ENCODE measurements at regions of chr2 and their contacts with region 1.

Region 1: DNA sequence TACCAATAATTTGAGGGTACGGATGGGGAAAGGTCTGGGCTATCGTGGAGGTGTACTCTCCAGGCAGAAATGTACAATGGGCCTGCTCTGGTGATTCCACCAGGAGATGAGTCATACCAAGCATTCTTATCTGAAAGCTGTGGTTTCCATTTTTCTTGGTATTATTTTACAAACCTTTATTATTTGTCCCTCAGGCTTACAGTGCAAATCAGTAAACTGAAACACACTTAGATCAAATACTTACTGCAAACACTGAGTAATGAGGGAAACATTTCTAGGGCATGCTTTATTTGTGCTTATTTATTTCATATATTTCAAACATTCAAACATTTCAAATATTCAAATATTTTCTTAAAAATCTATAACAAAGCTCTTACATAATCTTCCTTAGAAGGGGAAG is 319.8 kb downstream of the RND3 start:
- DNase-seq: peak; percentile 42 to 86
- H3K4me3 ChIP-seq: no peak overlapping the region
- H3K27ac ChIP-seq: peak overlapping the region; percentile 98
- H3K4me1 ChIP-seq: peaks cover 48% of the 10 kb centered on the region
- H3K27me3 ChIP-seq: no peaks in the 10 kb centered on the region
- CTCF ChIP-seq: no peak

Region 2: DNA sequence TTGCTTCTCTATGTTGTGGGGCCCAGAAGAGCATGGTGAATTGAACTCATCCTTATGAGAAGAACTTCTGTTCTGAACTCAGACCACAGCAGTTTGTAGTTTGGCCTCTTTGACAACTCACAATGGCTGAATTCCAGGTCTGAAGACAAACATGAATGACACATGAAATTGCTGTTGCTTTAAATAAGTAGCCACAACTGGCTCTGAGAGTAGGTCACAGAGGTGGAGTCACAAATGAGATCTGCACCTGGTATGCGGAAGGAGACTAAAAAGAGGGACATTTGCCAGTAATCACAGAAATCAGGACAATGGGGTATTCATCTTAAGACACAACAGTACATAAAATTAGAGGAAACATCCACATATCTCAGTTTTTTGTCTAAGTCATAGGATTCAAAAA is 289.8 kb before region 1 on chr2:
- CTCF ChIA-PET with region 1: no interaction called
- POLR2A ChIA-PET with region 1: no interaction called
- intact Hi-C with region 1: loop called (anchors 1 kb)
- DNase-seq: peak; percentile 32 to 66
- H3K4me3 ChIP-seq: no peak overlapping the region
- H3K27ac ChIP-seq: 0 out of 2 replicates have a peak overlapping the region, but pooled peaks have one; percentile 26
- H3K4me1 ChIP-seq: 0 out of 2 replicates have a peak, but pooled peaks cover 6% of the 10 kb centered on the region
- H3K27me3 ChIP-seq: no peaks in the 10 kb centered on the region
- CTCF ChIP-seq: no peak

Region 3: GRCh38 chr2:150133623-150134022 is 34.1 kb before region 1 on chr2:
- CTCF ChIA-PET with region 1: no interaction called
- POLR2A ChIA-PET with region 1: no interaction called
- intact Hi-C with region 1: loop called (anchors 1 kb)
- DNase-seq: peak; percentile 49 to 81
- H3K4me3 ChIP-seq: no peak overlapping the region
- H3K27ac ChIP-seq: peak overlapping the region; percentile 74
- H3K4me1 ChIP-seq: peaks cover 5% of the 10 kb centered on the region; the same call in 1 of the 2 replicates
- H3K27me3 ChIP-seq: no peaks in the 10 kb centered on the region
- CTCF ChIP-seq: no peak

Region 4: DNA sequence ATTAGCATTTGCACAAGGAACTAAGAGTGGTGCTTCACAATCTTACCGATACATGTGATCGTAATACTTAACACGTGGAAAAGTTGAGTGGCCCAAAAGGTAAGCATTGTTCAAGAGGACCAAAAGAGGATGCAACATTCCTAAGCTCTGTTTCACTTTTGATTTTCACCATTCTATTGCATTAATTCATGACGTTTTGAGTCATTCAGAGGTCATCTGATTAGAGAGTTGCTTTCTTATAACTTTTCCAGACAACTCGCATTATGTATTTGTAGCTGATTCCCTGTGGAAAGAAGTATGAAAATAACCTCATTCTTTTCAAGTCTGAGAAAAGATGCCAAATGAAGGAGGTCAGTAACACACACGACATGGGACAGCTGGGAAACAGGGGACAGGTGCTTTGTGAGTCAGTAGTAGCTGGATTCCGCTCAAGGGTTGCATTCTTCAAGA is 24.6 kb before region 1 on chr2:
- CTCF ChIA-PET with region 1: interaction called, 4 read pairs
- POLR2A ChIA-PET with region 1: interaction called, 11 read pairs
- intact Hi-C with region 1: loop called (anchors 1 kb)
- DNase-seq: peak; percentile 22 to 70
- H3K4me3 ChIP-seq: no peak overlapping the region
- H3K27ac ChIP-seq: peak overlapping the region; percentile 94
- H3K4me1 ChIP-seq: peaks cover 22% of the 10 kb centered on the region
- H3K27me3 ChIP-seq: no peaks in the 10 kb centered on the region
- CTCF ChIP-seq: no peak

Region 5: GRCh38 chr2:150188177-150188576 is 20.5 kb after region 1 on chr2:
- CTCF ChIA-PET with region 1: no interaction called
- POLR2A ChIA-PET with region 1: no interaction called
- intact Hi-C with region 1: loop called (anchors 1 kb)
- DNase-seq: peak in 1 of 2 experiments; percentile 68
- H3K4me3 ChIP-seq: no peak overlapping the region
- H3K27ac ChIP-seq: peak overlapping the region; percentile 33; the same call in 1 of the 2 replicates
- H3K4me1 ChIP-seq: 0 out of 2 replicates have a peak, but pooled peaks cover 6% of the 10 kb centered on the region
- H3K27me3 ChIP-seq: no peaks in the 10 kb centered on the region
- CTCF ChIP-seq: no peak

Region 6: DNA sequence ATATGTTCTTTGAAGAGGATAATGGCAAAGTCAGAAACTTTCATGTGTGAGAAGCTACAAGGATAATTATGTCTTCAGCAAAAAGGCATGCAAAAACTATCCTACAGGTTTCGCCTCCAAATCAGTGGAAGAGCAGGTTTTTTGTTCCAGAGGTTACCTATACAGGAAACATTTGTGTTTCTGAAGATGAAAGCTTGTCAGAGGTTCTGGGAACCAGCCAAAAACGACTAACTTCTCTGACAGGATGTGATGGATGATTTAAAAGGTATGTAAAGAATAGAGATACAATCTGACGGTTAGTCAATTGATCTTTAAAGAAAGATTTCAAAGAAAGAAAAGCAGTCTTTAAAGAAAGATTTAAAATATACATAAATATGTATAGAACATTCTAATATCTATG is 282.2 kb after region 1 on chr2:
- CTCF ChIA-PET with region 1: no interaction called
- POLR2A ChIA-PET with region 1: no interaction called
- intact Hi-C with region 1: loop called (anchors 2 kb)
- DNase-seq: peak; percentile 52 to 93
- H3K4me3 ChIP-seq: no peak overlapping the region
- H3K27ac ChIP-seq: peak overlapping the region; percentile 87
- H3K4me1 ChIP-seq: peaks cover 22% of the 10 kb centered on the region
- H3K27me3 ChIP-seq: no peaks in the 10 kb centered on the region
- CTCF ChIP-seq: no peak